CD8-positive, alpha-beta T cell (primary cell): ENCODE measurements at regions of chr5 and their contacts with region 1.

Region 1: GRCh38 chr5:56900858-56901578 is 8.4 kb upstream of the SETD9 start:
- DNase-seq: peak in 7 of 9 experiments; percentile 12 to 73 (median 38)
- ATAC-seq: peak; percentile 65
- H3K4me3 ChIP-seq: no peak overlapping the region
- H3K4me3 Mint-ChIP-seq: no peak overlapping the region
- H3K27ac ChIP-seq: no peak overlapping the region
- H3K27ac Mint-ChIP-seq: no peak overlapping the region
- H3K4me1 ChIP-seq: no peaks in the 10 kb centered on the region
- H3K4me1 Mint-ChIP-seq: no peaks in the 10 kb centered on the region
- H3K27me3 ChIP-seq: no peaks in the 10 kb centered on the region
- H3K27me3 Mint-ChIP-seq: no peaks in the 10 kb centered on the region
- CTCF ChIP-seq: peak; percentile 84

Region 2: GRCh38 chr5:56409331-56410190 is 491.5 kb before region 1 on chr5:
- CTCF ChIA-PET with region 1: no interaction called
- POLR2A ChIA-PET with region 1: no interaction called
- intact Hi-C with region 1: no loop called
- DNase-seq: no peak
- ATAC-seq: no peak
- H3K4me3 ChIP-seq: no peak overlapping the region
- H3K4me3 Mint-ChIP-seq: no peak overlapping the region
- H3K27ac ChIP-seq: no peak overlapping the region
- H3K27ac Mint-ChIP-seq: no peak overlapping the region
- H3K4me1 ChIP-seq: no peaks in the 10 kb centered on the region
- H3K4me1 Mint-ChIP-seq: no peaks in the 10 kb centered on the region
- H3K27me3 ChIP-seq: no peaks in the 10 kb centered on the region
- H3K27me3 Mint-ChIP-seq: no peaks in the 10 kb centered on the region
- CTCF ChIP-seq: no peak

Region 3: GRCh38 chr5:56640763-56641406 is 260.1 kb before region 1 on chr5:
- CTCF ChIA-PET with region 1: no interaction called
- POLR2A ChIA-PET with region 1: no interaction called
- intact Hi-C with region 1: no loop called
- DNase-seq: peak in 1 of 9 experiments; percentile 9
- ATAC-seq: no peak
- H3K4me3 ChIP-seq: no peak overlapping the region
- H3K4me3 Mint-ChIP-seq: no peak overlapping the region
- H3K27ac ChIP-seq: no peak overlapping the region
- H3K27ac Mint-ChIP-seq: no peak overlapping the region
- H3K4me1 ChIP-seq: no peaks in the 10 kb centered on the region
- H3K4me1 Mint-ChIP-seq: no peaks in the 10 kb centered on the region
- H3K27me3 ChIP-seq: no peaks in the 10 kb centered on the region
- H3K27me3 Mint-ChIP-seq: no peaks in the 10 kb centered on the region
- CTCF ChIP-seq: no peak

Region 4: GRCh38 chr5:56854920-56855319 is 46.1 kb before region 1 on chr5:
- CTCF ChIA-PET with region 1: no interaction called
- POLR2A ChIA-PET with region 1: no interaction called
- intact Hi-C with region 1: no loop called
- DNase-seq: no peak
- ATAC-seq: no peak
- H3K4me3 ChIP-seq: no peak overlapping the region
- H3K4me3 Mint-ChIP-seq: no peak overlapping the region
- H3K27ac ChIP-seq: no peak overlapping the region
- H3K27ac Mint-ChIP-seq: no peak overlapping the region
- H3K4me1 ChIP-seq: peaks cover 37% of the 10 kb centered on the region
- H3K4me1 Mint-ChIP-seq: peaks cover 55% of the 10 kb centered on the region
- H3K27me3 ChIP-seq: no peaks in the 10 kb centered on the region
- H3K27me3 Mint-ChIP-seq: no peaks in the 10 kb centered on the region
- CTCF ChIP-seq: no peak

Region 5: DNA sequence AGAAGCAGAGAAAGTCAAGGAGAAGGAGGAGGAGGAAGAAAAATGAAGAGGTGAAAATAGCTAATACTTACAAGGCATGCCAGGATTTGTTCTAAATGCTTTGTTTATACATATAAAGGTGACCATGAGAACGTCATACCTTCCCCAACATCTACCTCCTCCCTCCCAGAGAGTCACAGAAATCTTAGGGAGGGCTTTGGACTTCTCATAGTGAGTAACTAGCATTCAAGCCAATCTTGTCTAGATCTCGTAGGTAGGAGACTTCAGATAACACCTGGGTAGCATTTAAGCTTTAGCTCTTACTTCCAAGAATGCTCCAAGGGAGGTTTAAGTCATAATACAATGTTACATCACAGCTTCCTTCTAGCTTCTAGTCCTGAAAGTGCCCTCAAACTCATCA is 236.4 kb after region 1 on chr5:
- CTCF ChIA-PET with region 1: interaction called, 64 read pairs
- POLR2A ChIA-PET with region 1: no interaction called
- intact Hi-C with region 1: loop called (anchors 1 kb)
- DNase-seq: peak in 1 of 9 experiments; percentile 2
- ATAC-seq: no peak
- H3K4me3 ChIP-seq: no peak overlapping the region
- H3K4me3 Mint-ChIP-seq: no peak overlapping the region
- H3K27ac ChIP-seq: no peak overlapping the region
- H3K27ac Mint-ChIP-seq: no peak overlapping the region
- H3K4me1 ChIP-seq: no peaks in the 10 kb centered on the region
- H3K4me1 Mint-ChIP-seq: no peaks in the 10 kb centered on the region
- H3K27me3 ChIP-seq: no peaks in the 10 kb centered on the region
- H3K27me3 Mint-ChIP-seq: no peaks in the 10 kb centered on the region
- CTCF ChIP-seq: no peak

Region 6: GRCh38 chr5:57215629-57216195 is 314.7 kb after region 1 on chr5:
- CTCF ChIA-PET with region 1: interaction called, 36 read pairs
- POLR2A ChIA-PET with region 1: no interaction called
- intact Hi-C with region 1: no loop called
- DNase-seq: no peak
- ATAC-seq: no peak
- H3K4me3 ChIP-seq: no peak overlapping the region
- H3K4me3 Mint-ChIP-seq: no peak overlapping the region
- H3K27ac ChIP-seq: peak overlapping the region in 1 of 2 experiments; percentile 31
- H3K27ac Mint-ChIP-seq: peak overlapping the region; percentile 67
- H3K4me1 ChIP-seq: peaks cover 10% of the 10 kb centered on the region
- H3K4me1 Mint-ChIP-seq: peaks cover 59% of the 10 kb centered on the region
- H3K27me3 ChIP-seq: no peaks in the 10 kb centered on the region
- H3K27me3 Mint-ChIP-seq: no peaks in the 10 kb centered on the region
- CTCF ChIP-seq: no peak

Region 7: DNA sequence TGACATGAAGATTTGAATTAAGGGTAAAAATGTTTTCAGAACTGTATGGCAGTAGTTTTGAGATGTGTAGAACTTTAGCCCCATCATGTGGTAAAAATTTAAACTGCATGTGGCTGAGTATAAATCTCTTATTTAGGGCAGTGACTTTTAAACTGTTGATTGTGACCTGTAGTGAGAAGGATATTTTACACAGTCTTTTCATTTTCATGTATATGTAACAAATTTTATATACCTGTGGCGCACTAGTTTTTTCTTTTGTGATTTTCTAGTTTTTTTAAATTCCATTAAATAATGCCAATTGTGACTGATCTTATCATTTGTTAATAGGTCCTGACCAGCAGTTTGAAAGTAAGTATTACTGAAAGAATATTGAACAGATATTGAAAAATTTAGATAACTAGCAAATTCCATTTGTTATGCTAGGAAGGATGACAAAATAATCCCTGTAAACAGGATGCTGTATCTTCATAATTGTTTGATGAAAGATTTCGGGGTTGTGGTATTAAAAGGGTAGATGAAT is 320.1 kb after region 1 on chr5:
- CTCF ChIA-PET with region 1: interaction called, 36 read pairs
- POLR2A ChIA-PET with region 1: no interaction called
- intact Hi-C with region 1: loop called (anchors 1 kb)
- DNase-seq: peak in 3 of 9 experiments; percentile 51 to 83 (median 78)
- ATAC-seq: peak; percentile 83
- H3K4me3 ChIP-seq: no peak overlapping the region
- H3K4me3 Mint-ChIP-seq: no peak overlapping the region
- H3K27ac ChIP-seq: no peak overlapping the region
- H3K27ac Mint-ChIP-seq: peak overlapping the region; percentile 64
- H3K4me1 ChIP-seq: peaks cover 14% of the 10 kb centered on the region
- H3K4me1 Mint-ChIP-seq: peaks cover 53% of the 10 kb centered on the region
- H3K27me3 ChIP-seq: no peaks in the 10 kb centered on the region
- H3K27me3 Mint-ChIP-seq: no peaks in the 10 kb centered on the region
- CTCF ChIP-seq: peak; percentile 99

Region 8: GRCh38 chr5:57277085-57277484 is 376.1 kb after region 1 on chr5:
- CTCF ChIA-PET with region 1: interaction called, 3 read pairs
- POLR2A ChIA-PET with region 1: no interaction called
- intact Hi-C with region 1: loop called in 1 of 2 experiments (anchors 1 kb)
- DNase-seq: peak in 1 of 9 experiments; percentile 14
- ATAC-seq: no peak
- H3K4me3 ChIP-seq: no peak overlapping the region
- H3K4me3 Mint-ChIP-seq: no peak overlapping the region
- H3K27ac ChIP-seq: no peak overlapping the region
- H3K27ac Mint-ChIP-seq: no peak overlapping the region
- H3K4me1 ChIP-seq: no peaks in the 10 kb centered on the region
- H3K4me1 Mint-ChIP-seq: no peaks in the 10 kb centered on the region
- H3K27me3 ChIP-seq: no peaks in the 10 kb centered on the region
- H3K27me3 Mint-ChIP-seq: peaks cover 13% of the 10 kb centered on the region
- CTCF ChIP-seq: no peak